Right lobe of liver (tissue), 6 donors: ENCODE measurements at regions of chr15 and their contacts with region 1.

Region 1: DNA sequence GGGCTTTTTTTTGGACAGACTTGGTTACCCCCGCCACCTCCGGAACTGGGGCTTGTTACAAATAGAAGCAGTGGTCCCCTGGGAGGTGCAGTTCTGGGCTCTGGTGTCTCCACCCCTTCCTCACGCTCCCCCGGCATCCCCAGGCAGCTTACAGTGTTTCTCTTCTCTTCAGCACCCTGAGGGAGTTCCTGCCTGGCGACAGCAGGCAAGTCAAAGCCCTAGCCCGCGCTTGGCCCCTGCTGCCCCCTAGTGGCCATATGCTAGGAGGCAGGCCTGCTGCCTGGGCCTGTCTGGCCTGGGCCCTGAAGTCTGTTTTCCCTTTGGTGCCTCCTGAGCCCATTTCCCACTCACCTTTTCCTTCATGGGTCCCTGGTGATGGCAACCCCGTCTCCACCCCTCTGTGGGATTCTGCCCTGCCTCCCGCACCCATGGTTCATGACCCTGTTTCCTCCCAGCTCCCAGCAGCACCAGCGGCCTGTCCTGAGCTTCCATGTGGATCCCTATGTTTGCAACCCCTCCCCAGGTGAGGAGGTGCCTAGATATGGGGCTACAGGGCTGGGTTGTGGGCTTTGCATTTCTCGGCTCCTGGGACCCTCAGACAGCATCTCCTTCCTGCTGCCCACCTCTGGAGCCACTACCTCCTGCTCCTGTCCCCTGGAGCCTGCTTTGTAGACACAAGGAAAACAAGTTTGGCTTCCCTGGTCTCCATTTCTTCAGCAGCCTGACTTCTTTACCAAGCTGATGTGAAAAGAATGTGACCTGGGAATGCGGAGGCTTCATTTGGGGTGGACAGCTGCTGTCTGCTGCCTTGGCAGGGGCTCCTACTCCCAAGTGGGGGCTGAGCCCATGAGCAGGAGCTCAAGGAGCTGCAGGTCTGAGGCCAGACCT is 2.2 kb downstream of the SNX22 start:
- DNase-seq: peak; percentile 91 to 92 (median 92)
- ATAC-seq: peak; percentile 76 to 87 (median 82)
- H3K4me3 ChIP-seq: no peak overlapping the region
- H3K27ac ChIP-seq: peak overlapping the region in 1 of 3 donors; percentile 9
- H3K4me1 ChIP-seq: peaks cover 0 to 21% (median 4%) of the 10 kb centered on the region in 4 donors
- H3K27me3 ChIP-seq: no peaks in the 10 kb centered on the region
- CTCF ChIP-seq: peak; percentile 96 to 100 (median 98)
- POLR2A ChIP-seq: peak; percentile 27

Region 2: GRCh38 chr15:64010719-64011118 is 143.0 kb before region 1 on chr15:
- intact Hi-C with region 1: no loop called
- DNase-seq: no peak
- ATAC-seq: peak; percentile 23 to 46 (median 34)
- H3K4me3 ChIP-seq: no peak overlapping the region
- H3K27ac ChIP-seq: no peak overlapping the region
- H3K4me1 ChIP-seq: peaks cover 0 to 20% (median 4%) of the 10 kb centered on the region in 4 donors
- H3K27me3 ChIP-seq: no peaks in the 10 kb centered on the region
- CTCF ChIP-seq: no peak
- POLR2A ChIP-seq: no peak

Region 3: GRCh38 chr15:64093627-64094417 is 59.9 kb before region 1 on chr15 and contains the start of gene CIAO2A:
- intact Hi-C with region 1: loop called (anchors 10 kb)
- DNase-seq: peak; percentile 93 to 98 (median 97)
- ATAC-seq: peak; percentile 73 to 86 (median 78)
- H3K4me3 ChIP-seq: peak within 1 kb of the TSS; percentile 71 to 92 (median 84)
- H3K27ac ChIP-seq: peak within 1 kb of the TSS; percentile 89 to 93 (median 90)
- H3K4me1 ChIP-seq: peaks cover 0 to 65% (median 14%) of the 10 kb centered on the region in 4 donors
- H3K27me3 ChIP-seq: no peaks in the 10 kb centered on the region
- CTCF ChIP-seq: no peak
- POLR2A ChIP-seq: peak; percentile 67
- total RNA-seq, gene CIAO2A: 84.2 to 186 (median 126) TPM